Psoas muscle (tissue), 8 donors: ENCODE measurements at regions of chr6 and their contacts with region 1.

Region 1: GRCh38 chr6:53300656-53301551 is 47.8 kb downstream of the ELOVL5 start:
- DNase-seq: no peak
- ATAC-seq: peak; percentile 46 to 60 (median 54)
- H3K4me3 ChIP-seq: no peak overlapping the region
- H3K27ac ChIP-seq: peak overlapping the region; percentile 39
- H3K4me1 ChIP-seq: peaks cover 23% of the 10 kb centered on the region
- H3K27me3 ChIP-seq: no peaks in the 10 kb centered on the region
- CTCF ChIP-seq: no peak

Region 2: GRCh38 chr6:53348371-53349208 is 47.7 kb after region 1 on chr6 and contains the start of gene ELOVL5:
- intact Hi-C with region 1: loop called in 1 of 2 experiments (anchors 5 kb)
- DNase-seq: peak; percentile 97
- ATAC-seq: peak; percentile 79 to 90 (median 84)
- H3K4me3 ChIP-seq: peak within 1 kb of the TSS; percentile 89
- H3K27ac ChIP-seq: peak within 1 kb of the TSS; percentile 85
- H3K4me1 ChIP-seq: no peaks in the 10 kb centered on the region
- H3K27me3 ChIP-seq: peaks cover 0 to 46% (median 10%) of the 10 kb centered on the region in 3 donors
- CTCF ChIP-seq: no peak
- total RNA-seq, gene ELOVL5: 5.7 to 14.4 (median 8.7) TPM